A549 (cell line): ENCODE measurements at regions of chr20 and their contacts with region 1.

Region 1: GRCh38 chr20:62926239-62927104 is at the start of gene DIDO1:
- DNase-seq: peak; percentile 88 to 96
- ATAC-seq: peak; percentile 83 to 89
- H3K4me3 ChIP-seq: peak within 1 kb of the TSS; percentile 76
- H3K27ac ChIP-seq: peak within 1 kb of the TSS; percentile 96 to 98
- H3K4me1 ChIP-seq: peaks cover 38% of the 10 kb centered on the region
- CTCF ChIP-seq: peak; percentile 45
- EP300 ChIP-seq: no peak
- POLR2A ChIP-seq: no peak
- RAD21 ChIP-seq: no peak
- polyA plus RNA-seq, gene DIDO1: 12.6 and 15.3 TPM in 2 replicates

Region 2: DNA sequence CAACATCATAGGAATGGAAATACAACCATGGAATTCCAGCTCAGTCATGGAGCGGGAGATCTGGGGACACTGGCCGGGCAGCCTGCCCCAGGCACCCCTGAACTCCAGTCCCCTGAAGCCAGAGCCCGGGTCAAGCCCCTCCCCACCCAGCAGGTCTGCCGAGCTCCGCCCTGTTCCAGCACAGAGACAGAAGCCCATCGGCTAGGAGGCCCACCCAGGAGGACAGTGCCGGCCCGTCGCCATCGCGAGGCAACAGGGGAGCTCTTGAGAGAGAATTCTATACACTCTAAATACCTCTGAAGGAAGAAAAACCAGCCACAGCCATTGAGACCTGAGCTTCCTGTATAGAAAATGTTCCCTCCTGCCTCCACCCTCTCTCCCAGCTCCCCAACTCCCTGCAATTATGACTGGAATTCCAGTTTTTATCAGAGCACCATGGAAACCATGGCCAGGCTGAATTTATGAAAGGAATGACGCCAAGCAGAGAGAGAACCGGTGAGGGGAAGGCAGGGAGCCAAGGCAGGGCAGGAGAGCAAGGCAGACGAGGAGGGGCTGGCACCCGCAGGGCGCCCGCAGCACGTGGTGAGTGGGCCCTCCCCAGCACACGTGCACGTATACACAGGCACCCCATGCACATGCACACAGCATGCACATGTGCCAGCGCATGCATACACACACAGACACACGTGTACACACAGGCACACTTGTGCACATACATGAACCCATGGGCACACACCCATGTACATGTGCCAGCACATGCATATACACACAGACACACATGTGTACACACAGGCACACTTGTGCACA is 157.8 kb before region 1 on chr20:
- CTCF ChIA-PET with region 1: no interaction called
- POLR2A ChIA-PET with region 1: no interaction called
- DNase-seq: no peak
- ATAC-seq: no peak; a peak in 1 of 6 replicates
- H3K4me3 ChIP-seq: no peak overlapping the region
- H3K27ac ChIP-seq: 0 out of 6 replicates have a peak overlapping the region, but pooled peaks of 1 of the 2 experiments have one; percentile 1
- H3K4me1 ChIP-seq: peaks cover 6% of the 10 kb centered on the region; the same call in 1 of the 3 replicates
- CTCF ChIP-seq: no peak
- EP300 ChIP-seq: no peak
- POLR2A ChIP-seq: no peak
- RAD21 ChIP-seq: no peak

Region 3: DNA sequence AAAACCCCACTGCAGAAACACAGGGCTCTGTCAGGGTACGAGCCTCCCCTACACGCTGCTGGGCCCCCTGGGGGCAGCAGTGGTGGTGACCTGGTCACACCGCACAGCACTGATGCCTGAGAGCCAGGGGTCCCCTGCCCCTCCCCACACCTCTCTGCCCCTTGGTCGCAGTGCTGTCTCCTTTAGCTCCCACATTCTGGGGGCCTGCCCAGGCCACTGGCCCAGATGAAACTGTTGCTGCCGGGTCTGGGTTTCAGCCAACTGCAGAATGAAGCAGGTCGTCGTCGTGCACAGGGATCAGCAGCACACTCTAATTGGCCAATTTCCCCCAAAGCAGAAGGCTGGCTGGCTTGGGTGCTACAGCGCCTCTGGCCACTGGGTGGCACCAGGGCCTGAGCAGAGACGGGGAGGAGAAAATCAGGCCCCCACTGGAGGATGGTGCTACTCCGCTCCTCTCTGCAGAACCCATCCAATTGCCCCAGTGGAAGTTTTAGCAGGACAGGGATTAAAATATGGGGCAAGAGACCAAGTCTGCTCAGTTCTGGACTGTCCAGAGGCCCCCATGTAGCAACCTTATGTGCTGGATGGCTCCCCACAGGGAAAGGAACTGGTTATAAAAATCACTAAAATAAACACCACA is 26.3 kb before region 1 on chr20:
- CTCF ChIA-PET with region 1: interaction called, 368 read pairs
- POLR2A ChIA-PET with region 1: no interaction called
- DNase-seq: peak; percentile 59 to 92
- ATAC-seq: peak; percentile 93 to 94
- H3K4me3 ChIP-seq: no peak overlapping the region
- H3K27ac ChIP-seq: no peak overlapping the region
- H3K4me1 ChIP-seq: peaks cover 5% of the 10 kb centered on the region; the same call in 2 of the 3 replicates
- CTCF ChIP-seq: peak; percentile 64
- EP300 ChIP-seq: no peak
- POLR2A ChIP-seq: no peak
- RAD21 ChIP-seq: peak; percentile 59 to 62

Region 4: DNA sequence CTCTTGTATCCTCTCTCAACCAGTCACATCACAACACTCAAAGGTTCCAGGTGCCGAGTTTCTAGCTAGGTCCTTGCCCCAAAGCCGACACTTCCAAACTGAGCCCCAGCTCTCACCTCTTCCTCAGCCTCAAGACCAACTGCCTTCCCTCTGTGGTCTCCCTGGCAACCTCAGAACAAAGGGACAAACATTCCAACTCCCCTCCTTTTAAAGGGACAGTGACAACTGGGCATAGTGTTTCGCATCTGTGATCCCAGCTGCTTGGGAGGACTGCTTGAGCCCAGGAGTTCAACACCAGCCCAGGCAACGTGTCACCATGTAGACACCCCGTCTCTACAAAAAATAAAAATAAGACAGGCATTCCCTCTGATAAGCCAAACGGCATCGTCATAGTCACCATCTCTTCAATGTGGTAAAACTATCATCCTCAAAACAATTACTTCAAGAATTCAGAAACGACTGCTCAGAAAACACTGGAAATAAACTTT is 11.5 kb before region 1 on chr20:
- CTCF ChIA-PET with region 1: interaction called, 368 read pairs
- POLR2A ChIA-PET with region 1: no interaction called
- DNase-seq: peak; percentile 41 to 63
- ATAC-seq: peak in 1 of 2 experiments; percentile 79; a peak in 3 of 6 replicates
- H3K4me3 ChIP-seq: no peak overlapping the region
- H3K27ac ChIP-seq: no peak overlapping the region
- H3K4me1 ChIP-seq: peaks cover 39% of the 10 kb centered on the region
- CTCF ChIP-seq: no peak
- EP300 ChIP-seq: no peak
- POLR2A ChIP-seq: no peak
- RAD21 ChIP-seq: no peak

Region 5: DNA sequence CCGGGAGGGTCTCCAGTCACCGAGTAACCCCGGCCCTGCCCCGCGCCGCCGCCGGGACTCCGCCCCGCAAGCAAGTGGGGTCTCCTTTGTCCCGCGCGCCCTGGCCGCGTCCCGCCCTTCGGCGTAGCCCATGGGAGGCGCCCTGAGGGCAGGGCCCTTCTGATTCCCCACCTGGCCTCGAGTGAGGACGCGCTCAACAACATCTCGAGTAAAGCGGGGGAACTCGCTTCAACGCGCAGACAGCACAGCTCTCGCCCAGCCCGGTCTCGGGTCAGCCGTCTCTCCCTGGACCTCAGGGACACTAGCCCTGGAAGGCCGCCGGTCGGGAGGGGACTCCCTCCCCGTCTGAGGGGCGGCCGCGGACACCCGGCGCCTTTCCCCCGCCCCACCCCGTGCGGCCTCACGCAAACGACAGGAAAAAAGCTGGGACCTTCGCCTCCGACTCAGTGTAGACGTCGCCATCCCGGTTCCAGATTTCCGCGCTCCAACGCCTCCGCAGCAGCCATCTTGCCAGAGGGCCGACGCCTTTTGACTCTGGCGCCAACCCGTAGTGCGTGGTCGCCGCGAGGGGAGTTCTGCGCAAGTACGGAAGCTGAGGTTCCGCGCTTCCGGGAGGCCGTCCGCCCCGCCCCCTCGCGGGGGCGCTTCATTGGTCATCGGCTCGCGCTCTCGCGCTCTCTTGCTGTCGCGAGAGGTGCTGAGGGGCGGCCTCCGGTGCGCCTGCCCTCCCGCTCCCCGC is 11.1 kb after region 1 on chr20:
- CTCF ChIA-PET with region 1: interaction called, 13 read pairs
- POLR2A ChIA-PET with region 1: interaction called, 4 read pairs
- DNase-seq: peak; percentile 83 to 96
- ATAC-seq: peak; percentile 93
- H3K4me3 ChIP-seq: peak overlapping the region; percentile 68
- H3K27ac ChIP-seq: peak overlapping the region; percentile 91 to 94
- H3K4me1 ChIP-seq: peaks cover 28% of the 10 kb centered on the region
- CTCF ChIP-seq: no peak
- EP300 ChIP-seq: no peak
- POLR2A ChIP-seq: peak; percentile 75
- RAD21 ChIP-seq: no peak